Naive thymus-derived CD4-positive, alpha-beta T cell (primary cell): ENCODE measurements at regions of chr21 and their contacts with region 1.

Region 1: GRCh38 chr21:41425954-41426675 is at the start of gene MX1:
- DNase-seq: peak; percentile 76 to 90 (median 87)
- ATAC-seq: peak; percentile 100
- H3K4me3 ChIP-seq: peak within 1 kb of the TSS; percentile 99
- H3K4me3 Mint-ChIP-seq: peak within 1 kb of the TSS; percentile 94 to 98 (median 97)
- H3K27ac ChIP-seq: peak within 1 kb of the TSS; percentile 92
- H3K27ac Mint-ChIP-seq: peak within 1 kb of the TSS; percentile 95 to 100 (median 98)
- H3K4me1 ChIP-seq: peaks cover 10 to 12% of the 10 kb centered on the region in 2 donors
- H3K4me1 Mint-ChIP-seq: peaks cover 16 to 83% (median 62%) of the 10 kb centered on the region in 7 donors
- H3K27me3 ChIP-seq: no peaks in the 10 kb centered on the region
- H3K27me3 Mint-ChIP-seq: no peaks in the 10 kb centered on the region
- total RNA-seq, gene MX1: 67.6 to 384 (median 74.5) TPM

Region 2: DNA sequence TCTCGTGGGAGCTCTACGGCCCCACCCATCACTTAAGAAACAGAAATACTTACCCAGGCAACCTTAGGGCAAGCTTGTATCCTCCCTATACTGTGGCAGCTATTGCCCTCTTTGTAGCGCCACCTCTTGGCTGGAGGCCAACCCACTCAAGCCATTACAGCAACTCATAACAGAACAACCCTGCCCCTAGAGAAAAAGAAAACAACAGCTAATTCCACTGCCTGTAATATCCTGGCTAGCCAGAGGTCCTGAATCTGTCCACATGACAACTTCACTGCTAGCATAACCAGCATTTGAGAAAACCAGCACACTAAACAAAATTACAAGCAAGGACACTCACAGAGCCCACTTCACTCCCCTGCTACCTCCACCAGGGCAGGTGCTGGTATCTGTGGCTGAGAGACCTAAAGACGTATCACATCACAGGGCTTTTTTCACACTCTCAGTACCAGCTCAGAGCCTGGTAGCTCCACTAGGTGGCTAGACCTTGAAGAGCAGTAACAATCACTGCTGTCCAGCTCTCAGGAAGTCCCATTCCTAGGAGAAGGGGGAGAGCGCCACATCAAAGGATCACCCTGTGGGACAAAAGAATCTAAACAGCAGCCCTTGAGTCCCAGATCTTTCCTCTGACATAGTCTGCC is 14.5 kb before region 1 on chr21:
- CTCF ChIA-PET with region 1: interaction called, 8 read pairs
- POLR2A ChIA-PET with region 1: interaction called, 19 read pairs
- intact Hi-C with region 1: loop called in 1 of 2 experiments (anchors 2 kb)
- DNase-seq: no peak
- ATAC-seq: peak; percentile 37
- H3K4me3 ChIP-seq: no peak overlapping the region
- H3K4me3 Mint-ChIP-seq: peak overlapping the region in 1 of 10 donors; percentile 35
- H3K27ac ChIP-seq: no peak overlapping the region
- H3K27ac Mint-ChIP-seq: peak overlapping the region in 1 of 9 donors; percentile 58
- H3K4me1 ChIP-seq: no peaks in the 10 kb centered on the region
- H3K4me1 Mint-ChIP-seq: peaks cover 0 to 15% (median 4%) of the 10 kb centered on the region in 7 donors
- H3K27me3 ChIP-seq: no peaks in the 10 kb centered on the region
- H3K27me3 Mint-ChIP-seq: peaks cover 0 to 34% (median 0%) of the 10 kb centered on the region in 5 donors